ENCODE measurements at regions of chr3 and their contacts with region 1.

Region 1: GRCh38 chr3:73018790-73019441 is 22.3 kb downstream of the PPP4R2 start:
- DNase-seq: no peak
- ATAC-seq: no peak
- H3K4me3 ChIP-seq: no peak overlapping the region
- H3K4me3 Mint-ChIP-seq: peak overlapping the region in 4 of 10 donors; percentile 3 to 40 (median 28)
- H3K27ac ChIP-seq: no peak overlapping the region
- H3K27ac Mint-ChIP-seq: peak overlapping the region in 2 of 9 donors; percentile 0 to 51
- H3K4me1 ChIP-seq: peaks cover 11 to 23% of the 10 kb centered on the region in 2 donors
- H3K4me1 Mint-ChIP-seq: peaks cover 30 to 83% (median 69%) of the 10 kb centered on the region in 7 donors
- H3K27me3 ChIP-seq: no peaks in the 10 kb centered on the region
- H3K27me3 Mint-ChIP-seq: no peaks in the 10 kb centered on the region

Region 2: DNA sequence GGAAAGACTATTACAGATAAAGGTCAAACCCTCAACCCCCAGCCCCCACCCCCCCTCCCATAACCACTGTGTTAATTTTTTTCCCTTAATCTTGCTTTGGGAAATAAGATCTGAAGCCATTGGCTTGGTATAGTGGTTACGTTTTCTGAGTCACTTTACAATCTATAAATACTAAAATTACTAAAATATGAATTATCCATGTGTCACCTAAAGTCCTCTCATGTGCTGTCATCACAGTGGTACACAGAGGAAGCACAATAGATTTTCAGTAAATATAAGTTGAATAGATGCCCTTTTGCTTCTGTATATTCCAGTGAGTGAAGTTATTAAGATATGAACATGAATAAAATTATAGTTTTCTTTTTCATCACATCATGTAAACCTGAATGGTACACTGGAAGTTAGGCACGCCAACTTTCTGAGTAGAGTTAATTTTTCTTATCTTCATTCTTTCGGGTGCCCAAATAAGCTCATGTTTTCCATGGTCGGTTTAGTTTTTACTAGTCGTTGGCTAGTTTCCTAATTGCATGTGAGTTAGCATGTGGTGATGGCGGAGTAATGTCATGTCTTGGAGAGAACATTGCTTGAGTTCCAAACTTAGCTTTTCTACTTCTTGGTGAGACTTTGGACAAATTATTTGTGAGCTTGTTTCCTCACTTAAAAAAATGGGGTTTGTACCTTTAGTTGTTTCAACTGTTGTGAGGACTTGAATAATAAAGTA is 10.8 kb before region 1 on chr3:
- CTCF ChIA-PET with region 1: no interaction called
- POLR2A ChIA-PET with region 1: no interaction called
- intact Hi-C with region 1: loop called in 1 of 2 experiments (anchors 1 kb)
- DNase-seq: no peak
- ATAC-seq: no peak
- H3K4me3 ChIP-seq: no peak overlapping the region
- H3K4me3 Mint-ChIP-seq: peak overlapping the region in 7 of 10 donors; percentile 2 to 71 (median 43)
- H3K27ac ChIP-seq: no peak overlapping the region
- H3K27ac Mint-ChIP-seq: peak overlapping the region in 4 of 9 donors; percentile 10 to 57 (median 26)
- H3K4me1 ChIP-seq: peaks cover 11 to 18% of the 10 kb centered on the region in 2 donors
- H3K4me1 Mint-ChIP-seq: peaks cover 64 to 98% (median 91%) of the 10 kb centered on the region in 7 donors
- H3K27me3 ChIP-seq: no peaks in the 10 kb centered on the region
- H3K27me3 Mint-ChIP-seq: no peaks in the 10 kb centered on the region

Measured in naive thymus-derived CD4-positive, alpha-beta T cell (primary cell).